CD4-positive, alpha-beta T cell (primary cell): ENCODE measurements at regions of chr6 and their contacts with region 1.

Region 1: GRCh38 chr6:26025894-26026832 is 61.1 kb upstream of the HFE start:
- DNase-seq: peak; percentile 75 to 98 (median 88)
- ATAC-seq: peak; percentile 45
- H3K4me3 ChIP-seq: peak overlapping the region; percentile 70
- H3K4me3 Mint-ChIP-seq: peak overlapping the region; percentile 90
- H3K27ac ChIP-seq: peak overlapping the region; percentile 86 to 88
- H3K27ac Mint-ChIP-seq: peak overlapping the region; percentile 97
- H3K4me1 ChIP-seq: peaks cover 34% of the 10 kb centered on the region
- H3K4me1 Mint-ChIP-seq: peaks cover 42% of the 10 kb centered on the region
- H3K27me3 ChIP-seq: no peaks in the 10 kb centered on the region
- H3K27me3 Mint-ChIP-seq: no peaks in the 10 kb centered on the region
- CTCF ChIP-seq: peak; percentile 86

Region 2: DNA sequence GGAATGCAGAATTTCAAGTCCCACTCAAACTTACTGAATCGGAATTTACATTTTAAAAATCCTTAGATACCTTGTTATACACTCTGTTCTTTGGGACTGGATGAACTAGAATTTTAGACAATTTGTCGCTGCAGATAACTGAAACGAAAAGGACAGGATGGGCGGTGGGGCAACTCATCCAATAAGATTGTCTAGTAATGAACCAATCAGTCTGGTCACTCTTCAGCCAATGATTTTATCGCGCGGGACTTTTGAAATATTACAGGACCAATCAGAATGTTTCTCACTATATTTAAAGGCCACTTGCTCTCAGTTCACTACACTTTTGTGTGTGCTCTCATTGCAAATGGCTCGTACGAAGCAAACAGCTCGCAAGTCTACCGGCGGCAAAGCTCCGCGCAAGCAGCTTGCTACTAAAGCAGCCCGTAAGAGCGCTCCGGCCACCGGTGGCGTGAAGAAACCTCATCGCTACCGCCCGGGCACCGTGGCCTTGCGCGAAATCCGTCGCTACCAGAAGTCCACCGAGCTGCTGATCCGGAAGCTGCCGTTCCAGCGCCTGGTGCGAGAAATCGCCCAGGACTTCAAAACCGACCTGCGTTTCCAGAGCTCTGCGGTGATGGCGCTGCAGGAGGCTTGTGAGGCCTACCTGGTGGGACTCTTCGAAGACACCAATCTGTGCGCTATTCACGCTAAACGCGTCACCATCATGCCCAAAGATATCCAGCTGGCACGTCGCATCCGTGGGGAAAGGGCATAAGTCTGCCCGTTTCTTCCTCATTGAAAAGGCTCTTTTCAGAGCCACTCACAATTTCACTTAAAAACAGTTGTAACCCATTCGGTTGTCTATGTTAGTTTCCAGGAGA is 19.1 kb after region 1 on chr6:
- CTCF ChIA-PET with region 1: interaction called, 40 read pairs
- POLR2A ChIA-PET with region 1: interaction called, 919 read pairs
- intact Hi-C with region 1: loop called (anchors 1 to 2 kb)
- DNase-seq: peak; percentile 49 to 96 (median 74)
- ATAC-seq: peak; percentile 55
- H3K4me3 ChIP-seq: peak overlapping the region; percentile 70
- H3K4me3 Mint-ChIP-seq: peak overlapping the region; percentile 97
- H3K27ac ChIP-seq: peak overlapping the region; percentile 71 to 91
- H3K27ac Mint-ChIP-seq: peak overlapping the region; percentile 94
- H3K4me1 ChIP-seq: peaks cover 21% of the 10 kb centered on the region
- H3K4me1 Mint-ChIP-seq: peaks cover 28% of the 10 kb centered on the region
- H3K27me3 ChIP-seq: no peaks in the 10 kb centered on the region
- H3K27me3 Mint-ChIP-seq: no peaks in the 10 kb centered on the region
- CTCF ChIP-seq: no peak

Region 3: DNA sequence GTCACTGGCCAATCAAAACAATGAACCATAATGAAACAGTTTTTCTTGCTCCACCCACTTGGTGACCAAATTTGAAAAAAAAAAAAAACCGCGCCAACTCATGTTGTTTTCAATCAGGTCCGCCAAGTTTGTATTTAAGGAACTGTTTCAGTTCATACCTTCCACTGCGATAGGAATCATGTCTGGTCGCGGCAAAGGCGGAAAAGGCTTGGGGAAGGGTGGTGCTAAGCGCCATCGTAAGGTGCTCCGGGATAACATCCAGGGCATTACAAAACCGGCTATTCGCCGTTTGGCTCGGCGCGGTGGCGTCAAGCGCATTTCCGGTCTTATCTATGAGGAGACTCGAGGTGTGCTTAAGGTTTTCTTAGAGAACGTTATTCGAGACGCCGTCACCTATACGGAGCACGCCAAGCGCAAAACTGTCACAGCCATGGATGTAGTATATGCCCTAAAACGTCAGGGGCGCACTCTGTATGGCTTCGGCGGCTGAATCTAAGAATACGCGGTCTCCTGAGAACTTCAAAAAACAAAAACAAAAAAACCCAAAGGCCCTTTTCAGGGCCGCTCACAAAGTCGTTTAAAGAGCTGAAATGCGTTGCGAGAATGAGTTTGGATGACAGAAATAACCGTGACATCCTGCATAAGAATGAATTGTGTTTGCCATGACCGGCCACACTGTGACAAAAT is 77.8 kb after region 1 on chr6:
- CTCF ChIA-PET with region 1: interaction called, 10 read pairs
- POLR2A ChIA-PET with region 1: interaction called, 53 read pairs
- intact Hi-C with region 1: loop called (anchors 2 kb)
- DNase-seq: peak; percentile 84 to 96 (median 90)
- ATAC-seq: peak; percentile 88
- H3K4me3 ChIP-seq: peak overlapping the region; percentile 58
- H3K4me3 Mint-ChIP-seq: peak overlapping the region; percentile 94
- H3K27ac ChIP-seq: peak overlapping the region; percentile 83 to 85
- H3K27ac Mint-ChIP-seq: peak overlapping the region; percentile 99
- H3K4me1 ChIP-seq: peaks cover 16% of the 10 kb centered on the region
- H3K4me1 Mint-ChIP-seq: peaks cover 13% of the 10 kb centered on the region
- H3K27me3 ChIP-seq: no peaks in the 10 kb centered on the region
- H3K27me3 Mint-ChIP-seq: peaks cover 5% of the 10 kb centered on the region
- CTCF ChIP-seq: peak; percentile 58

Region 4: DNA sequence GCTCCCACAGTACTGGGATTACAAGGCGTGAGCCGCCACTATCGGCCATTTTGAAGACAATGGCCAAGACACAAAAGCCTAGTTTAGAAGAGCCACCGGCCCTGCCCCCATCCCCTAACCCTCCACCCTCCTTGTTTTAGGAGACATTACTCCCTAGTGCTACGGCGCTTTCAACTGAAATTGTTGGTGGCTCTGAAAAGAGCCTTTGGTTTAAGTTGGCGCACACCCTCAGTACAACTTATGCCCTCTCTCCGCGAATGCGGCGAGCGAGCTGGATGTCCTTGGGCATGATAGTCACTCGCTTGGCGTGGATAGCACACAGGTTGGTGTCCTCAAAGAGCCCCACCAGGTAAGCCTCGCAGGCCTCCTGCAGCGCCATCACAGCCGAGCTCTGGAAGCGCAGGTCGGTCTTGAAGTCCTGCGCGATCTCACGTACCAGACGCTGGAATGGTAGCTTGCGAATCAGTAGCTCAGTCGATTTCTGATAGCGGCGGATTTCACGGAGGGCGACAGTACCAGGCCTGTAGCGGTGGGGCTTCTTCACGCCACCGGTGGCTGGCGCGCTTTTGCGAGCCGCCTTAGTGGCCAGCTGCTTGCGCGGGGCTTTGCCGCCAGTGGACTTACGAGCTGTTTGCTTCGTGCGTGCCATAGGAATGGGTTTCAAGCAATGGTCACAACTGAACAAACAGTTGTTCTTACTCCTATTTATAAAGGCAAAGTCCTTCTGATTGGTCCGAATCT is 224.0 kb after region 1 on chr6:
- CTCF ChIA-PET with region 1: no interaction called
- POLR2A ChIA-PET with region 1: interaction called, 22 read pairs
- intact Hi-C with region 1: no loop called
- DNase-seq: peak; percentile 64 to 93 (median 74)
- ATAC-seq: peak; percentile 78
- H3K4me3 ChIP-seq: peak overlapping the region; percentile 75
- H3K4me3 Mint-ChIP-seq: peak overlapping the region; percentile 97
- H3K27ac ChIP-seq: peak overlapping the region; percentile 72 to 80
- H3K27ac Mint-ChIP-seq: peak overlapping the region; percentile 88
- H3K4me1 ChIP-seq: peaks cover 29% of the 10 kb centered on the region
- H3K4me1 Mint-ChIP-seq: peaks cover 44% of the 10 kb centered on the region
- H3K27me3 ChIP-seq: no peaks in the 10 kb centered on the region
- H3K27me3 Mint-ChIP-seq: no peaks in the 10 kb centered on the region
- CTCF ChIP-seq: no peak

Region 5: DNA sequence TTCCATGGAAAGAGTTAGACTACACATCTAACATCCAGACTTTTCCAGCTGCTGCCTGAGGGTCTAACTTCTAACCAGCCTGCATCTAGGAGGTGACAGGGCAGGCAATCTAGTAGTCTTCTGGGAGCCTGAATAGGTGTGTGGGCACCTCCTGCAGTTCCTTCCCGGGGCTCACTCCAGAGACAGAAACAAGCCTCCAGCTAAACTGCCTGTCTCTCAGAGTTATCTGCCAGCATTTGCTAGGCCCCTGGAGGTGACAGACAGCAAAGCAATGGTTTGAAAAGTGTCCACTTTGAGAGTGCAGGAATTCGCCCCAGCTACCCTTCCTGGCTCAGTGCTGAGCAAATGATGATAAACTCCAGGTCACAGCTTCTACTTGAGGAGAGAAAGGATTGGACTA is 980.9 kb after region 1 on chr6:
- CTCF ChIA-PET with region 1: no interaction called
- POLR2A ChIA-PET with region 1: no interaction called
- intact Hi-C with region 1: no loop called
- DNase-seq: no peak
- ATAC-seq: no peak
- H3K4me3 ChIP-seq: no peak overlapping the region
- H3K4me3 Mint-ChIP-seq: no peak overlapping the region
- H3K27ac ChIP-seq: no peak overlapping the region
- H3K27ac Mint-ChIP-seq: no peak overlapping the region
- H3K4me1 ChIP-seq: no peaks in the 10 kb centered on the region
- H3K4me1 Mint-ChIP-seq: no peaks in the 10 kb centered on the region
- H3K27me3 ChIP-seq: peaks cover 6 to 10% of the 10 kb centered on the region in 2 experiments
- H3K27me3 Mint-ChIP-seq: peaks cover 55% of the 10 kb centered on the region
- CTCF ChIP-seq: no peak

Region 6: DNA sequence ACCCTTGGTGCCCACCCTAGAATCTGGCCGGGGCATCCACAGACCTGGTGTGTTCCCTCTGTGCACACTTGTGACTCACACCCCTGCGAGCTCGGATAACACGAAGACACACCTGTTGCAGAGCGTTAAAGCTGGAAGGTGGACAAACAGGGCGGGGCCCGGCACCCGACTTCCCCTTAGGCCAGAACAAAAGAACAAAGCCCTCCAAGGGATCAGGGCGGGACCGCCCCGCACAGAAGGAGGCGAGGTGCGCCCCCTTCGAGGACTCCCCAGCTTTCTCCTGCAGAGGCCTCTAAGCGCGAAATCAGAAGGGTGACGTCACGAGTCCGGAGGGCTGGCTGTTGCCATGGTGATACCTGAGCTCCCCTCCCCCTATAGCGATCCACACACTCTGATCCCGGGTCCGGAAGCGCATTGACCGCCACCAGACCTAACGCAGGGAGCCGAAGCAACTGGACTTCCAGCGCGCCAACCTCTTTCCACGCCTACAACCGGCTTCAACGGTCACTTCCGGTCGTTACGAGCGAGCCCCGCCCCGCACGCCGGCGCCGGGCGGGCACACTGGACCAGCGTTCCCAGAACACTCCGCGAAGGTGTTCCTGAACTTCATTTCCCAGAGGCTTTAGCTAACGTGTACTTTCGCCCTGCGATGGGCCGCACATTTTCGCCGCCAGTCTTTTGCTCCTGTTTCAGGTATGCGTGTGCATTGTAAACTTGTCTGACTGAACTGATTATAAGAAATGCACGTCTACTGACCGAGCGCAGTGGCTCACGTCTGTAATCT is 1446.6 kb after region 1 on chr6 and contains the start of gene ZNF184:
- CTCF ChIA-PET with region 1: no interaction called
- POLR2A ChIA-PET with region 1: no interaction called
- intact Hi-C with region 1: loop called (anchors 10 kb)
- DNase-seq: peak; percentile 68 to 94 (median 80)
- ATAC-seq: peak; percentile 59
- H3K4me3 ChIP-seq: peak within 1 kb of the TSS; percentile 85
- H3K4me3 Mint-ChIP-seq: peak within 1 kb of the TSS; percentile 88
- H3K27ac ChIP-seq: peak within 1 kb of the TSS; percentile 88 to 96
- H3K27ac Mint-ChIP-seq: peak within 1 kb of the TSS; percentile 91
- H3K4me1 ChIP-seq: peaks cover 21% of the 10 kb centered on the region
- H3K4me1 Mint-ChIP-seq: peaks cover 53% of the 10 kb centered on the region
- H3K27me3 ChIP-seq: no peaks in the 10 kb centered on the region
- H3K27me3 Mint-ChIP-seq: no peaks in the 10 kb centered on the region
- CTCF ChIP-seq: no peak
- total RNA-seq, gene ZNF184: 19.6 to 21.1 TPM

Region 7: DNA sequence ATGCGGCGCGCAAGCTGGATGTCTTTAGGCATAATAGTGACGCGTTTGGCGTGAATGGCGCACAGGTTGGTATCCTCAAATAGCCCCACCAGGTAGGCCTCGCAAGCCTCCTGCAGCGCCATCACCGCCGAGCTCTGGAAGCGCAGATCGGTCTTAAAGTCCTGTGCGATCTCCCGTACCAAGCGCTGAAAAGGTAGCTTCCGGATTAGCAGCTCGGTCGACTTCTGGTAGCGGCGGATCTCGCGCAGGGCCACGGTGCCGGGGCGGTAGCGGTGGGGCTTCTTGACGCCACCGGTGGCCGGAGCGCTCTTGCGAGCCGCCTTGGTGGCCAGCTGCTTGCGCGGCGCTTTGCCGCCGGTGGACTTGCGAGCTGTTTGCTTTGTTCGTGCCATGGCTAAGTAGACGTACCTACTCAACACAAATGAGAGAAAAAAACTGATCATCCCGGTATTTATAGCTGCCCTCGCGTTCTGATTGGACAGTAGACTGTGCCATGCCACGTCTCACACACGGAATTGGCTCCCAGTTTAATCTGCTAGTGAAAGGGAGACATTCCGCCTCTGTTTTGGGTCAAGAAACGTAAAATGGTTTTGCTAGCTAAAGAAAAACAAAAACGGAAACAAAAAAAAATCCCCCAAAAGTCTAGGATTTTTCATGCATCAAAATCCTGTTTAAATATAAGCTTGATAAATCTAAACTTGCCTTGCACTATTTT is 1845.9 kb after region 1 on chr6:
- CTCF ChIA-PET with region 1: no interaction called
- POLR2A ChIA-PET with region 1: interaction called, 44 read pairs
- intact Hi-C with region 1: no loop called
- DNase-seq: peak; percentile 71 to 97 (median 82)
- ATAC-seq: peak; percentile 75
- H3K4me3 ChIP-seq: peak overlapping the region; percentile 86
- H3K4me3 Mint-ChIP-seq: peak overlapping the region; percentile 93
- H3K27ac ChIP-seq: peak overlapping the region; percentile 89
- H3K27ac Mint-ChIP-seq: peak overlapping the region; percentile 93
- H3K4me1 ChIP-seq: peaks cover 39% of the 10 kb centered on the region
- H3K4me1 Mint-ChIP-seq: peaks cover 41% of the 10 kb centered on the region
- H3K27me3 ChIP-seq: no peaks in the 10 kb centered on the region
- H3K27me3 Mint-ChIP-seq: no peaks in the 10 kb centered on the region
- CTCF ChIP-seq: peak; percentile 43